ENCODE measurements at regions of chr6 and their contacts with region 1.

Region 1: GRCh38 chr6:70369332-70369950 is 43.9 kb upstream of the FAM135A start:
- DNase-seq: peak; percentile 68
- H3K4me3 ChIP-seq: no peak overlapping the region
- H3K27ac ChIP-seq: no peak overlapping the region
- H3K4me1 ChIP-seq: no peaks in the 10 kb centered on the region
- H3K27me3 ChIP-seq: peaks cover 7 to 24% of the 10 kb centered on the region in 2 experiments
- CTCF ChIP-seq: peak; percentile 91 to 92
- POLR2A ChIP-seq: no peak

Region 2: GRCh38 chr6:70310063-70310694 is 59.3 kb before region 1 on chr6:
- CTCF ChIA-PET with region 1: interaction called, 135 read pairs
- POLR2A ChIA-PET with region 1: no interaction called
- dilution Hi-C with region 1: no loop called
- intact Hi-C with region 1: loop called (anchors 1 kb)
- DNase-seq: peak; percentile 54
- H3K4me3 ChIP-seq: no peak overlapping the region
- H3K27ac ChIP-seq: no peak overlapping the region
- H3K4me1 ChIP-seq: no peaks in the 10 kb centered on the region
- H3K27me3 ChIP-seq: peaks cover 0 to 5% of the 10 kb centered on the region in 2 experiments
- CTCF ChIP-seq: peak; percentile 25 to 33
- POLR2A ChIP-seq: no peak

Region 3: DNA sequence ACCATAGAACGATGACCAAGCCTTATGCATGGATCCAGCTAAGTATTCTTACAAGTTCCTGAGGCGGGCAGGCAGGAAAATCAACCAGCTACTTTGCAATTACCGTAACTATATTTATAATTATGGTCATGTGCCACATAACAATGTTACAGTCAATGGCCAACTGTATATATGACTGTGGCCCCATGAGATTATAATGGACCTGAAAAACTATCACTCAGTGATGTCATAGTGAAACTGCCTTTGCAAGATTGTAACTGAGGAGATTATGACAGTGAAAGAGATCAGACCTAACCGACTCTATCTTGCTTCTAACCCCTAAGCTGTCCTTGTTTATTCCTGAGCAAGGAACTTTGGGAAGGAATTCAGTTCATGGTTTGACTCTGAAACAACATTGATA is 10.8 kb after region 1 on chr6:
- CTCF ChIA-PET with region 1: interaction called, 20 read pairs
- POLR2A ChIA-PET with region 1: no interaction called
- dilution Hi-C with region 1: no loop called
- intact Hi-C with region 1: no loop called
- DNase-seq: no peak
- H3K4me3 ChIP-seq: no peak overlapping the region
- H3K27ac ChIP-seq: no peak overlapping the region
- H3K4me1 ChIP-seq: no peaks in the 10 kb centered on the region
- H3K27me3 ChIP-seq: peaks cover 1 to 2% of the 10 kb centered on the region in 2 experiments
- CTCF ChIP-seq: no peak
- POLR2A ChIP-seq: no peak

Region 4: GRCh38 chr6:70413114-70413991 is 43.9 kb after region 1 on chr6 and contains the start of gene FAM135A:
- CTCF ChIA-PET with region 1: interaction called, 7 read pairs
- POLR2A ChIA-PET with region 1: interaction called, 3 read pairs
- dilution Hi-C with region 1: no loop called
- intact Hi-C with region 1: loop called (anchors 1 kb)
- DNase-seq: peak; percentile 98
- H3K4me3 ChIP-seq: peak within 1 kb of the TSS; percentile 64 to 94 (median 92)
- H3K27ac ChIP-seq: peak within 1 kb of the TSS; percentile 52
- H3K4me1 ChIP-seq: peaks cover 6% of the 10 kb centered on the region
- H3K27me3 ChIP-seq: peaks cover 0 to 3% of the 10 kb centered on the region in 2 experiments
- CTCF ChIP-seq: no peak
- POLR2A ChIP-seq: peak; percentile 85
- total RNA-seq, gene FAM135A: 9.6 and 11.5 TPM in 2 replicates

Region 5: DNA sequence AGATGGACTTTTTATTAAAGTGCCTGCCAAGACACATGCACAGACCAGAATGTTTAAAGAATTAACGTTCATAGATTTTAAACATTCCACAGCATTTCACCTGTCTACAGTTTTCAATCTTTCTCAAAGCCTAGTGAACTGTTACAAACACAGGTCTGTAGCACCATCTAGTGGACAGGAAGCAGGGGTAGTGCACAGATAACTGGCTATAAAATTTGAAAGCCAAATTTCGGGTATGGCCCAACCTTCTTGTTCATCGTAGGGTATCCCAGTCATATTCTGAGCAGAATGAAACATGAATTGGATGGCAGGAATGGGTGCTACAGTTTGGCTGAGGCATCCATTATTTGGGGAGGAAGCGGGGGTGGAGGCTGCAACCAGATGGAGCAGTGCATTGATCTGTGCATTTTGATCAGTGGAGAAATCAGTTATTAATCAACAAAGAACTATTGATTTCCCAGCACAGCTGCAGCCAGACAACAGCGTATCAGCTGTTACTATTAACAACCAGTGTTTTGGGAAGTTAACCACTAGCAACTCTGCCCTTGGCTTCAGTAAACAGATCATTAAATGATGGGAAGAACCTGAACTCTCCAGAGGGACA is 643.5 kb after region 1 on chr6:
- CTCF ChIA-PET with region 1: interaction called, 7 read pairs
- POLR2A ChIA-PET with region 1: no interaction called
- dilution Hi-C with region 1: no loop called
- intact Hi-C with region 1: loop called (anchors 1 kb)
- DNase-seq: peak; percentile 39
- H3K4me3 ChIP-seq: no peak overlapping the region
- H3K27ac ChIP-seq: no peak overlapping the region
- H3K4me1 ChIP-seq: no peaks in the 10 kb centered on the region
- H3K27me3 ChIP-seq: no peaks in the 10 kb centered on the region
- CTCF ChIP-seq: peak; percentile 69 to 71
- POLR2A ChIP-seq: no peak

Measured in endothelial cell of umbilical vein (primary cell).